Activated T-helper 2 cell treated with anti-CD3 and anti-CD28 coated beads, Interferon-gamma antibody, Interleukin-2, Interleukin-4, amounts not matched to agents 10 μg/mL and 5 μg/mL and 100 μg/mL, durations not matched to agents 14 hours and 24 hours and 36 hours (primary cell): ENCODE measurements at regions of chr7 and their contacts with region 1.

Region 1: DNA sequence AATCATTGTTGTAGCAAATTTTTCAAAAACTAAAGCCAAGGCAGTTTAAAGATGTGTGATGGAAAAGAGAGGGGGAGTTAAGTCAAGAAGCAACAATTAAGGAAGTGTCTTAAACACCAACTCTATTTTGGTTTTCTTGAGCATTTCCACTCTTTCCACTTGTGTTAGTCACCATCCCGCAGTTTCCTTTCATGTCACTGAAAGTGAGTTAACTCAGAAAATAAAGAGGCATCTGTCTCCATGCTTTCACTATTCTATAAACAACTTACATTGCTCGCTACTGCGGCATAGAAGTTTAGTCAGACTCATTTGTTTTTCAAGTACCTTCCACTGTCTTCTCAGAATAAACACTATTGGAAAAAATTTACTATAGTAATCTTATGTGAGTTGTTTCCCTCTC is 284.9 kb upstream of the SEMA3D start:
- DNase-seq: no peak
- H3K4me3 Mint-ChIP-seq: no peak overlapping the region
- H3K27ac Mint-ChIP-seq: peak overlapping the region; percentile 80
- H3K4me1 Mint-ChIP-seq: peaks cover 21% of the 10 kb centered on the region
- H3K27me3 Mint-ChIP-seq: no peaks in the 10 kb centered on the region

Region 2: GRCh38 chr7:85160223-85160622 is 311.5 kb before region 1 on chr7:
- intact Hi-C with region 1: loop called (anchors 1 kb)
- DNase-seq: no peak
- H3K4me3 Mint-ChIP-seq: no peak overlapping the region
- H3K27ac Mint-ChIP-seq: peak overlapping the region; percentile 59
- H3K4me1 Mint-ChIP-seq: peaks cover 6% of the 10 kb centered on the region
- H3K27me3 Mint-ChIP-seq: no peaks in the 10 kb centered on the region

Region 3: GRCh38 chr7:85516675-85517074 is 44.9 kb after region 1 on chr7:
- intact Hi-C with region 1: no loop called
- DNase-seq: no peak
- H3K4me3 Mint-ChIP-seq: no peak overlapping the region
- H3K27ac Mint-ChIP-seq: no peak overlapping the region
- H3K4me1 Mint-ChIP-seq: no peaks in the 10 kb centered on the region
- H3K27me3 Mint-ChIP-seq: no peaks in the 10 kb centered on the region

Region 4: GRCh38 chr7:85682833-85683620 is 211.3 kb after region 1 on chr7:
- intact Hi-C with region 1: no loop called
- DNase-seq: no peak
- H3K4me3 Mint-ChIP-seq: no peak overlapping the region
- H3K27ac Mint-ChIP-seq: no peak overlapping the region
- H3K4me1 Mint-ChIP-seq: no peaks in the 10 kb centered on the region
- H3K27me3 Mint-ChIP-seq: no peaks in the 10 kb centered on the region

Region 5: DNA sequence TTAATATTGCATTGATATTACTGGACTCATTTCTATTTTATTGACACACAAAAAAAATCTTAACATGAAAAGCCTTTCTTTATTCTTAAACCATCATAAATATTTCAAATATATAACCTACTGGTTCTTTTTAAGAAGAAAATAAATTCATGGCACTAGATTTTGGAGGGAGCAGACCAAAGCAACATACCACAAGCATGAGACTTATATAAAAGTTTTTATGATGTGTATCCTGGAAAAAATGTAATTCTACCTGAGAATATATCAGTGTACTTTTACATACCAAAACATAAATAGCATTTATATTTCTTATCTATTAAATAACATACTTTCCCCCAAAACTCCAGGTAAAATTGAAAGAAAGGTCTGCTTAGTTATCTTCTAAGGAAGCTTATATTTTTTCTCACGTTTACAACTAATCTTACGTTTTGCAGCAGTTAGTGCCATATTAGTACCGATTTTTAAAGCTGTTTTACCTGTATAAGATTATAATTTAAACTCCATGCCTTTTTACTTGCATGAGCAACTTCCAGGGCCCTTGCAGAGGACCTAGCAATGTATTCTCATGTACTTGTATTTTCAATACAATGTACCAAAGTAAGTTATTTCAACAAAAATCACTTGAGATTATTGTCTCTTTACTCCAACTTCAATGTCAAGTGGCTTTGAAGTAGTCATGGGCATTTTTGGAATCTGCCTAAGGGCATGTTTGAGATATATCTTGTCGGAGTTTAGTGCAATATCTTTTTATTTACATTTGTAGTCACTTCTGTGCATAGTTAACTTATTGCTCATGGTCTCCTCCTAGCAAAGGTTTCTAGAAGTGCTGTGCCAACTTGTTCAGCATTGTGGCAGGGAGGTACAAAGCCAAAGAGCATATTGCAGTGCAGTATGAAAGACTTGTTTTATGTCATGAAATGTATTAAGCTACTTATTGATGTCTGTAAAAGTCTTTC is 223.6 kb after region 1 on chr7:
- intact Hi-C with region 1: no loop called
- DNase-seq: no peak
- H3K4me3 Mint-ChIP-seq: no peak overlapping the region
- H3K27ac Mint-ChIP-seq: no peak overlapping the region
- H3K4me1 Mint-ChIP-seq: no peaks in the 10 kb centered on the region
- H3K27me3 Mint-ChIP-seq: no peaks in the 10 kb centered on the region